PC-3 (cell line): ENCODE measurements at regions of chr7 and their contacts with region 1.

Region 1: GRCh38 chr7:96321658-96322372 is at the start of gene SLC25A13:
- DNase-seq: peak; percentile 81
- ATAC-seq: peak; percentile 92
- H3K4me3 ChIP-seq: peak within 1 kb of the TSS; percentile 86
- H3K27ac ChIP-seq: peak within 1 kb of the TSS; percentile 89
- H3K4me1 ChIP-seq: peaks cover 17% of the 10 kb centered on the region
- H3K27me3 ChIP-seq: no peaks in the 10 kb centered on the region
- CTCF ChIP-seq: no peak
- total RNA-seq, gene SLC25A13: 14.6 and 19.5 TPM in 2 replicates

Region 2: DNA sequence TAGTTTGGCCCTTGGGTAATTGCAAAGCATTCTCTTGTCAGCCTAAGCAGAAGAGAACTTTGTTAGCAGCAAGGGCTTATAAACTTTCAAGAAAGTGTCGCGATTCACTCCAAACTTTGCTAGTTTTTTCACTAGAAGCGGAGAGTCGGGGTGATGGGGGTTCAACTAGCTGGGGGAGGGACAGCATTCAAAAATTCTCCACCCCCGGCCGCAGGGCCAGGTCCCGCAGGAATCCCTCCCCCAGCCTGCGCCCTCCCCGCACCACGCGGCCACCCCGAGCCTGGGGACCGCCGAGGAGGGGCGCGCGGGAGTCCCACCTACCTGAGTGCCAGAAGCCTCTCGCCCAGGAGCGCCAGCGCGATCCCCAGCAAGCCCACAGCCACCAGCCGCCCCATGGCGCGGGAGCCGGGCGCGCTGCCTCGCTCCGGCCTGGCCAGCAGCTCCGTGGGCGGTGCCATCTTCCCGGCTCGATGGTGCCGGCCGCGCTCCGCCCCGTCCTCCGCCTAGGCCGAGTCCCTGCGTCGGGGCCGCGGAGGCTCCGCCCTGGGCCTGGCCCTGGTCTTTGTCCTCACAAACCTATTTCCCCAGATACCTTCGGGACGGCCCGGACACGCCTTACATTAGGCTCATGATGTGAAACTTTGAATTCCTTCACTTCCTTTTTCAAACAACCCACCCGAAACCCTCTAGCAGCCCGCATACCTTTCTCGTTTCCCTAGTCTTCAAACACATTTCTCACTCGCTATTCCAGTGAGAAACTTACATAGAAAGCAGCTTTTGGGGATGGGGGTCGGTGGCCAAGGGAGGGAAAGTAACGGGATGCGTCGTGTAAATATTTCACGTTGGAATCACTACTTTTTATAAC is 887.0 kb before region 1 on chr7 and contains the start of gene PON2:
- CTCF ChIA-PET with region 1: no interaction called
- POLR2A ChIA-PET with region 1: no interaction called
- intact Hi-C with region 1: no loop called
- DNase-seq: peak; percentile 85
- ATAC-seq: peak; percentile 99
- H3K4me3 ChIP-seq: peak within 1 kb of the TSS; percentile 90
- H3K27ac ChIP-seq: peak within 1 kb of the TSS; percentile 79
- H3K4me1 ChIP-seq: peaks cover 23% of the 10 kb centered on the region
- H3K27me3 ChIP-seq: no peaks in the 10 kb centered on the region
- CTCF ChIP-seq: no peak
- total RNA-seq, gene PON2: 51.6 and 56.4 TPM in 2 replicates

Region 3: GRCh38 chr7:96084881-96085551 is 236.8 kb before region 1 on chr7:
- CTCF ChIA-PET with region 1: no interaction called
- POLR2A ChIA-PET with region 1: no interaction called
- intact Hi-C with region 1: loop called (anchors 5 kb)
- DNase-seq: peak; percentile 88
- ATAC-seq: peak; percentile 72
- H3K4me3 ChIP-seq: no peak overlapping the region
- H3K27ac ChIP-seq: peak overlapping the region; percentile 59
- H3K4me1 ChIP-seq: peaks cover 42% of the 10 kb centered on the region
- H3K27me3 ChIP-seq: no peaks in the 10 kb centered on the region
- CTCF ChIP-seq: no peak

Region 4: GRCh38 chr7:96219382-96220130 is 102.3 kb before region 1 on chr7:
- CTCF ChIA-PET with region 1: no interaction called
- POLR2A ChIA-PET with region 1: no interaction called
- intact Hi-C with region 1: loop called (anchors 5 kb)
- DNase-seq: peak; percentile 93
- ATAC-seq: peak; percentile 97
- H3K4me3 ChIP-seq: no peak overlapping the region
- H3K27ac ChIP-seq: peak overlapping the region; percentile 74
- H3K4me1 ChIP-seq: peaks cover 25% of the 10 kb centered on the region
- H3K27me3 ChIP-seq: no peaks in the 10 kb centered on the region
- CTCF ChIP-seq: no peak

Region 5: DNA sequence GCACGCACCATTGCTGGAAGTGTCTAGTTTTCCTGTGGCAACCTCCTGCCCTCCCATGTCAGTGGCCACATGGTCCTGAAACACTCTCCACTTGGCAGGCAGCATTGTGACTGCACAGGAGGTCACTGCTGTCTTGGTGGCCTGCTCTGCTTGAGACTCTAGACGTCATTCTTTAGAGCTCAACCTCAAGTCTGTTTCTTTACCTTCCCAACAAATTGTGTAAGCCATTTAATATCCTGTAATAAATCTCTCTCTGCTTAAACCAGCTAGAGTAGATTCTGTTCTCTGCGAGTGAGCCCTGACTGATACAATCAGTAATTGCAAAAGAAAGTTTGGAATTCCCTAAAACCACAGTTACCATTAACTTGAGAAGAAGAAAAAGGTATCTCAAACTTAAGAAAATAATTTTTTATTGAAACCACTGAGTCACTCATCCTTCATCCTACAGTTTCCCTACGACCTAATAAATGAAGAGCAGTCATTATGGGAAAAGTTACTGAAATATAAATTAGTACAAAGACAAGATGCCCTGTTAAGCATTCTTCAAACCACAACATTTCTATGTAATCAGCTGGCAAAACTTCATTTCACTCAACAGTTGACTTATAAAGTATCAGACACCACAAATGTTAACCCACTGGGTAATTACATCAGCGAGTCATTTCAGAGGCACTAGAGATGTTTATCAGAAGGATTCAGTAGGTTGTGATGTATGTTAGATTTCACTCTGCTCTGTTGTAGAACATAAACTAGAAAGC is 17.9 kb before region 1 on chr7:
- CTCF ChIA-PET with region 1: no interaction called
- POLR2A ChIA-PET with region 1: interaction called, 4 read pairs
- intact Hi-C with region 1: loop called (anchors 2 kb)
- DNase-seq: peak; percentile 77
- ATAC-seq: peak; percentile 55
- H3K4me3 ChIP-seq: peak overlapping the region; percentile 12; the same call in 1 of the 2 replicates
- H3K27ac ChIP-seq: peak overlapping the region; percentile 97
- H3K4me1 ChIP-seq: peaks cover 40% of the 10 kb centered on the region
- H3K27me3 ChIP-seq: no peaks in the 10 kb centered on the region
- CTCF ChIP-seq: no peak

Region 6: DNA sequence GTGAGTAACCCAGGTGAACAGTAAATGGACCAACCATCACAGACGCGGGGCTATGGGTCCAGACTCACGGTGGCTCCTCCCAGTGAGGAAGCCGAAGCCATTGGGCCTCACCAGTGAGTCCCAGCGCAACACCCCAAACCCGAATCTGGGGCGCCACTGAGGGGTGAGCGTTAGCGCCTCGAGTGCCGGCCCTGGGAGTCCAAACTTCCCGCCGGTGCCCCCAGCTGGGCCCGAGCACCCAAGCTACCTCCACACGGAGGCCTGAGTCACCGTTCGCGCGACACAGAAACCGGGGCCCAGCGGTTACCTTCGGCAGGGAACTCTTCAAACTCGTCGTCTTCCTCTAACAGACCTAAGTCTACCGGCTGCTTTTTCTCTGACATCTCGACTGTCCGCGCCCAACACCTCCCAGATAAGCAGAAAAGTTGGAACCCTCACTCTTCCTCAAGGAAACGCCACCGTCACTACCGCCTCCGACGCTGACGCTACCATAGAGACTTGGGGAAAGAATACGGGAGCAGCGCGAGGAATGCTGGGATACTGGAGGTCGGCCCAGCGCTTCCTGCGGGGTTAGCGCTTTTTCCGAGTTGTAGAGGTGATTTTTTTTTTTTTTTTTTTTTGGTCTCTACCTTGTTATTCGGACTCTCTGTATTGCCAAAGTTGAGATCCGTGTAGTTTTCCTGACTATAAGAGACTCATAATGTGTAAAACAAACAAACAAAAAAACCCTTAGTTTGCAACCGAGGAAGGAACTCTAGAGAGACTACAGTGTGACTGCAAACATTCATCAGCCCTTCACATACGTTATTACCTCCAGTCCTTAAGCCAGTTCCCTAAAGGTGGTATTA is 387.8 kb after region 1 on chr7 and contains the start of gene SEM1:
- CTCF ChIA-PET with region 1: no interaction called
- POLR2A ChIA-PET with region 1: no interaction called
- intact Hi-C with region 1: loop called (anchors 10 kb)
- DNase-seq: peak; percentile 81
- ATAC-seq: peak; percentile 96
- H3K4me3 ChIP-seq: peak within 1 kb of the TSS; percentile 92
- H3K27ac ChIP-seq: peak within 1 kb of the TSS; percentile 74
- H3K4me1 ChIP-seq: peaks cover 17% of the 10 kb centered on the region
- H3K27me3 ChIP-seq: no peaks in the 10 kb centered on the region
- CTCF ChIP-seq: no peak
- total RNA-seq, gene SEM1: 263 and 292 TPM in 2 replicates